ENCODE measurements at regions of chrX and their contacts with region 1.

Region 1: GRCh38 chrX:45758319-45758718 is 557.6 kb upstream of the DIPK2B start:
- DNase-seq: peak in 4 of 5 donors; percentile 36 to 77 (median 48)
- H3K4me3 ChIP-seq: peak overlapping the region in 1 of 2 donors; percentile 33
- H3K4me3 Mint-ChIP-seq: peak overlapping the region; percentile 73 to 91 (median 86)
- H3K27ac ChIP-seq: peak overlapping the region; percentile 56
- H3K27ac Mint-ChIP-seq: peak overlapping the region in 6 of 7 donors; percentile 90 to 96 (median 94)
- H3K4me1 ChIP-seq: peaks cover 91% of the 10 kb centered on the region
- H3K4me1 Mint-ChIP-seq: peaks cover 45 to 76% (median 60%) of the 10 kb centered on the region in 4 donors
- H3K27me3 ChIP-seq: no peaks in the 10 kb centered on the region
- H3K27me3 Mint-ChIP-seq: no peaks in the 10 kb centered on the region

Region 2: GRCh38 chrX:45309801-45310200 is 448.5 kb before region 1 on chrX:
- CTCF ChIA-PET with region 1: no interaction called
- POLR2A ChIA-PET with region 1: no interaction called
- intact Hi-C with region 1: no loop called
- DNase-seq: no peak
- H3K4me3 ChIP-seq: no peak overlapping the region
- H3K4me3 Mint-ChIP-seq: peak overlapping the region in 1 of 8 donors; percentile 41
- H3K27ac ChIP-seq: no peak overlapping the region
- H3K27ac Mint-ChIP-seq: no peak overlapping the region
- H3K4me1 ChIP-seq: no peaks in the 10 kb centered on the region
- H3K4me1 Mint-ChIP-seq: no peaks in the 10 kb centered on the region
- H3K27me3 ChIP-seq: no peaks in the 10 kb centered on the region
- H3K27me3 Mint-ChIP-seq: no peaks in the 10 kb centered on the region

Region 3: GRCh38 chrX:45769761-45770582 is 11.7 kb after region 1 on chrX:
- CTCF ChIA-PET with region 1: interaction called, 10 read pairs
- POLR2A ChIA-PET with region 1: interaction called, 189 read pairs
- intact Hi-C with region 1: loop called (anchors 1 kb)
- DNase-seq: peak in 3 of 5 donors; percentile 20 to 46 (median 32)
- H3K4me3 ChIP-seq: peak overlapping the region; percentile 55 to 68
- H3K4me3 Mint-ChIP-seq: peak overlapping the region; percentile 85 to 95 (median 90)
- H3K27ac ChIP-seq: peak overlapping the region; percentile 74
- H3K27ac Mint-ChIP-seq: peak overlapping the region; percentile 89 to 95 (median 94)
- H3K4me1 ChIP-seq: peaks cover 63% of the 10 kb centered on the region
- H3K4me1 Mint-ChIP-seq: peaks cover 29 to 80% (median 49%) of the 10 kb centered on the region in 4 donors
- H3K27me3 ChIP-seq: no peaks in the 10 kb centered on the region
- H3K27me3 Mint-ChIP-seq: no peaks in the 10 kb centered on the region